PC-3 (cell line): ENCODE measurements at regions of chr6 and their contacts with region 1.

Region 1: DNA sequence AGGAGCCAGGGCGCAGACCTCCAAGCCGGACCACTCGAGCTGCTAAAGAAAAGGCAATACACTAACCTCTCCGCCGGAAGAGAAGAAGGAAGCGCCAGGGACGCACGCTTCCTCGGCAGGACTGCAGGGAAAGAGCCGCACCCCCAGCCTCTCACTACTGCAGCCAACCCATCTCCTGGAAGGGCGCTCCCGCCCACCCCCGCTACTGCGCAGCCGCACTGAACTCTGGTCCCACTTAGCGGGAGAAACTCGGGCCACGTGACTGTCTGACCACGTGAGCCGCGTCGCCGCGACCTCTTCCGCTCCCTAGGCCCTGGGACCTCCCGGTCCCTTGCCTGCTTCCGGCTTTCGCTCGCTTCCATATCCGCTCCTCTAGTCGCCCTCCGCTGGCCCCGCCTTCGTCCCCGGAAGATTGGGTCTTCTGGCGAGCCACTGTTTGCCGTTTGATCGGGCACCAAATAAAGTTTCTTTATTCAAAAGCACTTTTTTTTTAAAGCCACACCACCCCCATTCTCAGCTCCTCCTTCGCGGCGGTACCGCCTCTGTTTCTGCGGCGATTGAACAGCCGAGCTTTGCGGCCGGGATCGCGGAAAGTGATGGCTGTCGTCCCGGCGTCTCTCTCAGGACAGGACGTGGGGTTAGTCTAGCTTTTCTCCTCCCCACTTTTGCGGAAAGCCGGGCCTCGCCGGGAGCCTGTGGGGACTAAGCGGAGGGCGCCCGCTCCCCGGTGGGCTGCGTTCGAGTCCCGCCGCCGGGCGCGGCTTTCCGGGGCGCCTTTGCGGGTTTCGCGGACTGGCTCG is at the start of gene RMND1:
- DNase-seq: peak; percentile 98
- ATAC-seq: peak; percentile 97
- H3K4me3 ChIP-seq: peak within 1 kb of the TSS; percentile 99
- H3K27ac ChIP-seq: peak within 1 kb of the TSS; percentile 68
- H3K4me1 ChIP-seq: peaks cover 6% of the 10 kb centered on the region; the same call in 1 of the 2 replicates
- H3K27me3 ChIP-seq: no peaks in the 10 kb centered on the region
- CTCF ChIP-seq: no peak
- total RNA-seq, gene RMND1: 13.9 and 20.8 TPM in 2 replicates

Region 2: GRCh38 chr6:149783551-149783950 is 1668.6 kb before region 1 on chr6:
- CTCF ChIA-PET with region 1: no interaction called
- POLR2A ChIA-PET with region 1: interaction called, 14 read pairs
- intact Hi-C with region 1: no loop called
- DNase-seq: no peak
- ATAC-seq: no peak
- H3K4me3 ChIP-seq: no peak overlapping the region
- H3K27ac ChIP-seq: no peak overlapping the region
- H3K4me1 ChIP-seq: no peaks in the 10 kb centered on the region
- H3K27me3 ChIP-seq: no peaks in the 10 kb centered on the region
- CTCF ChIP-seq: no peak

Region 3: GRCh38 chr6:151390276-151391032 is 61.7 kb before region 1 on chr6:
- CTCF ChIA-PET with region 1: no interaction called
- POLR2A ChIA-PET with region 1: no interaction called
- intact Hi-C with region 1: loop called (anchors 2 kb)
- DNase-seq: peak; percentile 97
- ATAC-seq: peak; percentile 84
- H3K4me3 ChIP-seq: peak overlapping the region; percentile 94
- H3K27ac ChIP-seq: peak overlapping the region; percentile 94
- H3K4me1 ChIP-seq: peaks cover 30% of the 10 kb centered on the region
- H3K27me3 ChIP-seq: no peaks in the 10 kb centered on the region
- CTCF ChIP-seq: no peak